ENCODE measurements at regions of chr2 and their contacts with region 1.

Region 1: GRCh38 chr2:68487773-68488355 is 20.5 kb downstream of the APLF start:
- DNase-seq: no peak
- H3K4me3 ChIP-seq: no peak overlapping the region
- CTCF ChIP-seq: no peak

Region 2: DNA sequence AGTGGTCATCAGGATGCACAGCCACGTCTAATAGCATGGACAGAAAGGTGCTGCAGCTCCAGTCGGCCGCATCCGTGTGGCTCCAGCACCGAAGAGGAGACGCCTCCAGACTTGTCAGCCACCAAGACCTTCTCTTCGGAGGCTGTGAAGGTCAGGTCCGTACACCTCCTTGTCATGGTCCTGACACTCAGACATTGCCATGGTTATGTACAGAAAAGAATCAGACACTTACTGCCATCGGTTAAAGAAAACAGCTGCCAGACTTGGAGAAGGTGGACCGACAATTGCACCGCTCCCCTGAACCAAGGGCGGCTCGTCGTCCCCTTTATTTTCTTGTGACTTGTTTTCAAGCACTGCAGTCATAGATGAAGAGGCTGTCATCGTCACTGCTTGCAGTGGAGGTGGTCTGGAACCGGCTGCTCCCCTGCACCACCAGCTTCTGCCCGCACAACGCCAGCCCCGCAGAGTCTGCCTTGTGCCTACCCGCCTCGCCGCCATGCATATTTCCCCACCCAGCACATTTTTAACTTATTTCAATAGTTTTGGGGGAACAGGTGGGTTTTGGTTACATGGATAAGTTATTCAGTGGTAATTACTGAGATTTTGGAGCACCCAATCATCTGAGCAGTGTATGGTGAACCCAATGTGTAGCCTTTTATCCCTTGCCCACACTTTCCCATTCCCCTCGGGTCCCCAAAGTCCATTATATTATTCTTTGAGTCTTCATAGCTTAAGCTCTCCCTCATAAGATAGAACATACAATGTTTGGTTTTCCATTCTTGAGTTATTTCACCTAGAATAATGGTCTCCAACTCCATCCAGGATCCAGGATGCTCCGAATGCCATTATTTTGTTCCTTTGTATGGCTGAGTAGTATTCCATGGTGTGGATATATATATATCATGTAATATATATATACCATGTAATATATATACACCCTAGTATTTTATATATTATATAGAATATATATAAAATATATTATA is 38.9 kb before region 1 on chr2:
- CTCF ChIA-PET with region 1: no interaction called
- POLR2A ChIA-PET with region 1: no interaction called
- DNase-seq: no peak
- H3K4me3 ChIP-seq: no peak overlapping the region
- CTCF ChIP-seq: no peak

Region 3: DNA sequence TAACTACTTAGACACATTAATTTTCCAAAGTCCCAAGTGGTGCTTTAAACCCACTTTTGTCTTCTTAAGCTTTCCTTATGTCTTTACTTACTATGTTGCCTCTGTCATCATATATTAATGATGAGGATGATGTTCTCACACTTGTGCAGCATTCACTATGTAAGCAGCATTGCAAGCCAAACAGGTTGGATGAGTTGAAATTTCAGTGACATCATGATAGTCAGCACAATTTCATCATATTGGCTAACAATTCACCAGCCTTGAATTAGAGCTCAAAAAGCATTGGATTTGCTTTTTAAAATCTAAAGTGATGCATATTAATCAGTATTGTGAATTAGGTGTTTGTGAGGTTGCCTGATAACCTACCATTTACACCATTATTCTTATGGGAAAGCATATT is 12.8 kb before region 1 on chr2:
- CTCF ChIA-PET with region 1: interaction called, 14 read pairs
- POLR2A ChIA-PET with region 1: no interaction called
- DNase-seq: no peak
- H3K4me3 ChIP-seq: no peak overlapping the region
- CTCF ChIP-seq: no peak

Region 4: DNA sequence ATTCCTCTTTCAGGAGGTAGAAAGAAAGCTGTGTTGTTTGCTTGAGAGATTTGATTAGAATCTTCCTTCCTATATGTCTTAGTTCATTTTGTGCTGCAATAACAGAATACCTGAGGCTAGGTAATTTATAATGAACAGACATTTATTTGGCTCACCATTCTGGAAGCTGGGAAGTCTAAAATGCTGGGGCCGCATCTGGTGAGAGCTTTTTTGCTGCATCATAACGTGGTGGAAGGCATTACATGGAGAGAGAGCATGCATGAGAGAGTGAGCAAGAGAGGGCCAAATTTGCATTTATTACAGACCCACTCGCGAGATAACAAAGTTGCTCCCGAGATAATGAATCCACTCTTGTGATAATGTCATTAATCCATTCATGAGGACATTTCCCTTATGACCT is 13.9 kb after region 1 on chr2:
- CTCF ChIA-PET with region 1: interaction called, 12 read pairs
- POLR2A ChIA-PET with region 1: no interaction called
- DNase-seq: no peak
- H3K4me3 ChIP-seq: no peak overlapping the region
- CTCF ChIP-seq: no peak

Region 5: DNA sequence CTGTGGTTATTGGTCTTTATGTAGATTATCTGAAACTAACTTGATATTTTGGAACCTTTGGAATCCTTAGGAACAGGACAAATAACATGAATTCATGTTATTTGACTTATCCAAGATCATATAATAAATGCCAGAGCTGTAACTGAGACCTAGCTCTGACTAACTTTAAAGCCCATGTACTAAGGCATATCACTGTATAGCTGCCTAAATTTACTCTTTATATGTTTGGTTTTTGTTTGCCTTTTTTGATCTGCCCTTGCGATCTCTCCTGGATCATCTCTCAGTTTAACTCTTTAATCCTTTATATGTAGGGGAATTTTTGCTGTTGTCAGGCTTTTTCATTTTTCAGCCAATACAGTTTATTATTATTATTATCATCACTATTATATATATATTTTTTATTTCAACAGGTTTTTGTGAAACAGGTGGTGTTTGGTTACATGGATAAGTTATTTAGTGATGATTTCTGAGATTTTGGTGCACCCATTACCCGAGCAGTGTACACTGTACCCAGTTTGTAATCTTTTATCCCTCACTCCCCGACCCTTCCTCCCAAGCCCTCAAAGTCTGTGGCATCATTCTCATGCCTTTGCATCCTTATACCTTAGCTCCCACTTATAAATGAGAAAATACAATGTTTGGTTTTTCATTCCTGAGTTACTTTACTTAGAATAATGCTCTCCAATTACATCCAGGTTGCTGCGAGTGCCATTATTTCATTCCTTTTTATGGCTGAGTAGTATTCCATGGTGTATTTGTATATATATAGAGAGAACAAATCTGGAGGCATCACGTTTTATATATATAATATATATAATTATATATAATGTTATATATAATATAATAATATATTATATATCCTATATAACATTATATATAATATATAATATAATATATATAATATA is 28.4 kb after region 1 on chr2:
- CTCF ChIA-PET with region 1: no interaction called
- POLR2A ChIA-PET with region 1: no interaction called
- DNase-seq: no peak
- H3K4me3 ChIP-seq: no peak overlapping the region
- CTCF ChIP-seq: no peak

Region 6: GRCh38 chr2:68689553-68690537 is 202.0 kb after region 1 on chr2:
- CTCF ChIA-PET with region 1: no interaction called
- POLR2A ChIA-PET with region 1: no interaction called
- DNase-seq: no peak
- H3K4me3 ChIP-seq: no peak overlapping the region
- CTCF ChIP-seq: no peak

Measured in AG04449 (cell line).